ENCODE measurements at regions of chr5 and their contacts with region 1.

Region 1: GRCh38 chr5:7955476-7955875 is 86.5 kb downstream of the MTRR start:
- DNase-seq: no peak
- H3K4me3 ChIP-seq: no peak overlapping the region
- H3K27ac ChIP-seq: no peak overlapping the region
- H3K4me1 ChIP-seq: no peaks in the 10 kb centered on the region
- H3K27me3 ChIP-seq: peaks cover 77% of the 10 kb centered on the region
- CTCF ChIP-seq: no peak

Region 2: DNA sequence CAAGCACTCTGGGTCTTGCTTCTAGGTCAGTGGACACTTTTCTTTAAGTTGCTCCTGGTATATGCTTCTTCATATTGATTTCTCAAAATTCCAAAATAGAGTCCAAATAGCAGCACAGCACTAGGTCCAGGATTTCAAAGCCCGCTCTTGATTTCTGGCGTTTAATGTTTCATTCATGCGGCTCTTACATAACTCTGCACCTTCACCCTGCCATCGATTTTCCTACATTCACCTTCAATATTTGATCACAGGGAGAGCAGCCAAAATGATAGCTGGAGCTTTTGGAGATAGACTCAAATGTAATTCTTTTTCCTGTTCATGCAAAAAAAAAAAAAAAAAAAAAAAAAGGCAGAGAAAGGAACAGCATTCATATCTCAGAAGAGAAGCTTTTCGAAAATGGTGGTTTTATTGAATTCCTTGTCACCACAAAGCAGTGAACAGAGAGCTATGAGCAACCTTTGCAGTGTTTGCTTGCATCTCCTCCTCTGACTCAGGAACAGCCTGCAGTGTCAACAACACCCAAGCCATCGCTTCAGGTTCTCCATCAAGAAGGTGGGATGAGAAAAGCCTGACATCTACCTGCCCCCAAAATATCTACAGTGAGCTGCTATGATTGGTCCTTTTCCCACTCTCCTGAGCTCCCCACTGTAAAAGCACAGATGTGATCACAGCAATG is 1674.9 kb before region 1 on chr5:
- CTCF ChIA-PET with region 1: interaction called, 14 read pairs
- POLR2A ChIA-PET with region 1: no interaction called
- intact Hi-C with region 1: no loop called
- DNase-seq: no peak
- H3K4me3 ChIP-seq: no peak overlapping the region
- H3K27ac ChIP-seq: no peak overlapping the region
- H3K4me1 ChIP-seq: no peaks in the 10 kb centered on the region
- H3K27me3 ChIP-seq: peaks cover 33% of the 10 kb centered on the region
- CTCF ChIP-seq: no peak

Region 3: GRCh38 chr5:8123559-8123958 is 168.1 kb after region 1 on chr5:
- CTCF ChIA-PET with region 1: no interaction called
- POLR2A ChIA-PET with region 1: no interaction called
- intact Hi-C with region 1: no loop called
- DNase-seq: no peak
- H3K4me3 ChIP-seq: no peak overlapping the region
- H3K27ac ChIP-seq: no peak overlapping the region
- H3K4me1 ChIP-seq: no peaks in the 10 kb centered on the region
- H3K27me3 ChIP-seq: peaks cover 5% of the 10 kb centered on the region; the same call in 1 of the 2 replicates
- CTCF ChIP-seq: no peak

Region 4: GRCh38 chr5:8839361-8840055 is 884.0 kb after region 1 on chr5:
- CTCF ChIA-PET with region 1: no interaction called
- POLR2A ChIA-PET with region 1: no interaction called
- intact Hi-C with region 1: no loop called
- DNase-seq: no peak
- H3K4me3 ChIP-seq: no peak overlapping the region
- H3K27ac ChIP-seq: no peak overlapping the region
- H3K4me1 ChIP-seq: no peaks in the 10 kb centered on the region
- H3K27me3 ChIP-seq: no peaks in the 10 kb centered on the region
- CTCF ChIP-seq: no peak

Measured in PC-9 (cell line).